ENCODE measurements at regions of chr5 and their contacts with region 1.

Region 1: GRCh38 chr5:132526290-132526973 is 16.9 kb downstream of the IL5 start:
- DNase-seq: peak; percentile 50
- ATAC-seq: peak; percentile 95
- H3K4me3 ChIP-seq: no peak overlapping the region
- H3K27ac ChIP-seq: no peak overlapping the region
- H3K4me1 ChIP-seq: peaks cover 1% of the 10 kb centered on the region; the same call in 1 of the 2 replicates
- H3K27me3 ChIP-seq: peaks cover 13% of the 10 kb centered on the region
- CTCF ChIP-seq: peak; percentile 74
- POLR2A ChIP-seq: no peak
- RAD21 ChIP-seq: peak; percentile 72

Region 2: GRCh38 chr5:132639706-132640130 is 113.3 kb after region 1 on chr5:
- CTCF ChIA-PET with region 1: no interaction called
- POLR2A ChIA-PET with region 1: no interaction called
- dilution Hi-C with region 1: no loop called
- in situ Hi-C with region 1: no loop called
- intact Hi-C with region 1: no loop called
- DNase-seq: no peak
- ATAC-seq: no peak
- H3K4me3 ChIP-seq: no peak overlapping the region
- H3K27ac ChIP-seq: no peak overlapping the region
- H3K4me1 ChIP-seq: no peaks in the 10 kb centered on the region
- H3K27me3 ChIP-seq: no peaks in the 10 kb centered on the region
- CTCF ChIP-seq: no peak
- POLR2A ChIP-seq: no peak
- RAD21 ChIP-seq: no peak

Region 3: DNA sequence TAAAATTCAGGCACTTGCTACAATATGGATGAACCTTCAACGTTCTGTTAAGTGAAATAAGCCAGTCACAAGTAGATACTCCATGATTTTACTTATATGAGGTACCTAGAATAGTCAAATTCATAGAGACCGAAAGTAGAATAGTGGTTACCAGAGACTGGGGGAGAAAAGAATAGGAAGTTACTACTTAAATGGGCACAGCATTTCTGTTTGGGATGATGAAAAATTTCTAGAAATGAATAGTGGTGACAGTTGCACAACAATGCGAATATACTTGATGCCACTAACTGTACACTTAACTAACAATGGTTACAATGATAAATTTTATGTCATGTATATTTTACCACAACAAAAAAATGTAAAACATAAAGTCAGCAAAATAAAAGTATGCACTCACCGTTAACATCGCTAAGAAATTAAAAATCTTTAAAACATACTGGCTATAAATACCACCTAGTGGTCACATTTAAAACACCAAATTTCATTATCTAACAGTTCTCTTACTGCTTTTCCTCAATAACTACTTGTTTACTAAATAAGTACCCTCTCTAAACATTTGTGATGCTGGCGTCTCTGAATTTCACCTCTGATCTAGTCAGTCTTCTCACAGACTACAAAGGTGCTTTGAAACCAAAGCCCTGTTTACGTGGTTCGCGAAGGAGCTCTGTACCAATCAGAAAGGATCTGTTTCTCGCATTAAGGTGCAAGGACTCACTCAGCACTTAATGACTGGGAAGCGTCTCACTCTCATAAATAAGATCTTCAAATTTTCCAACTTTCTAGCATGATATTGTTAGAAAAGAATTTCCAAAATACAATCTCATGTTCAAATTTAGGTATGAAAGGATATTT is 188.2 kb after region 1 on chr5:
- CTCF ChIA-PET with region 1: no interaction called
- POLR2A ChIA-PET with region 1: no interaction called
- dilution Hi-C with region 1: no loop called
- in situ Hi-C with region 1: loop called (anchors 10 kb)
- intact Hi-C with region 1: loop called (anchors 10 kb)
- DNase-seq: peak; percentile 15
- ATAC-seq: peak; percentile 60; the same call in 1 of the 2 replicates
- H3K4me3 ChIP-seq: no peak overlapping the region
- H3K27ac ChIP-seq: no peak overlapping the region
- H3K4me1 ChIP-seq: no peaks in the 10 kb centered on the region
- H3K27me3 ChIP-seq: no peaks in the 10 kb centered on the region
- CTCF ChIP-seq: peak; percentile 48
- POLR2A ChIP-seq: no peak
- RAD21 ChIP-seq: peak; percentile 43